ENCODE measurements at regions of chr19 and their contacts with region 1.

Region 1: GRCh38 chr19:14006243-14006765 is at the start of gene RFX1:
- DNase-seq: peak; percentile 99
- H3K4me3 Mint-ChIP-seq: peak within 1 kb of the TSS; percentile 87
- H3K27ac Mint-ChIP-seq: peak within 1 kb of the TSS; percentile 99
- H3K4me1 Mint-ChIP-seq: peaks cover 35% of the 10 kb centered on the region
- H3K27me3 Mint-ChIP-seq: peaks cover 2% of the 10 kb centered on the region
- total RNA-seq, gene RFX1: 16.0 and 17.0 TPM in 2 replicates

Region 2: GRCh38 chr19:13952154-13953035 is 53.9 kb before region 1 on chr19 and contains the start of gene DCAF15:
- intact Hi-C with region 1: loop called (anchors 1 kb)
- DNase-seq: peak; percentile 99
- H3K4me3 Mint-ChIP-seq: peak within 1 kb of the TSS; percentile 96
- H3K27ac Mint-ChIP-seq: peak within 1 kb of the TSS; percentile 86
- H3K4me1 Mint-ChIP-seq: peaks cover 17% of the 10 kb centered on the region
- H3K27me3 Mint-ChIP-seq: no peaks in the 10 kb centered on the region
- total RNA-seq, gene DCAF15: 57.8 and 61.5 TPM in 2 replicates

Region 3: DNA sequence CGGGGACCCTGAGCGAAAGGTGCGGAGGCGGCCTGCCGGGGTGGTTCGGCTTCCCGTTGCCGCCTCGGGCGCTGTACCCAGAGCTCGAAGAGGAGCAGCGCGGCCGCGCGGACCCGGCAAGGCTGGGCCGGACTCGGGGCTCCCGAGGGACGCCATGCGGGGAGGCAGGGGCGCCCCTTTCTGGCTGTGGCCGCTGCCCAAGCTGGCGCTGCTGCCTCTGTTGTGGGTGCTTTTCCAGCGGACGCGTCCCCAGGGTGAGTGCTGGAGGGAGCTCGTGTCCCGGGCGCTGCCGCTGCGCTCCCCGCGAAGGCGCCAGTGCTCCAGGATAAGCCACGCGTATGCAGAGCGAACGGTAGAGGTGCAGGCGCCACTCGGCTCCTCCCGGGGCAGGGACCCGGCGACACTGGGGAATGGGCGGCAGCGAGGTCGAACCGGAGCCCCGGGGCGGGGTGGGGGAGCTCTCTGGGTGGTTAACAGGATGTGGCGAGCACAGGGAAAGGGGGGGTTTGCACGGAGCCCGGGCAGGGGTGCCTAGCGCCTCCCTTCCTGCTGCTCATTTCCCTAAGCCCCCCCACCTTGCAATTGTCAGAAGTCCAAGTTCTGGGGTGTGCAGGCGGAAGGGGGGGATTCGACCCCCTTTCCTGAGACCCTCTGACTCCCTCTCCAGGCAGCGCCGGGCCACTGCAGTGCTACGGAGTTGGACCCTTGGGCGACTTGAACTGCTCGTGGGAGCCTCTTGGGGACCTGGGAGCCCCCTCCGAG is 25.6 kb after region 1 on chr19 and contains the start of gene IL27RA:
- intact Hi-C with region 1: loop called (anchors 1 kb)
- DNase-seq: peak; percentile 78
- H3K4me3 Mint-ChIP-seq: peak within 1 kb of the TSS; percentile 95
- H3K27ac Mint-ChIP-seq: peak within 1 kb of the TSS; percentile 96
- H3K4me1 Mint-ChIP-seq: peaks cover 13% of the 10 kb centered on the region
- H3K27me3 Mint-ChIP-seq: peaks cover 3% of the 10 kb centered on the region
- total RNA-seq, gene IL27RA: 82.5 and 84.9 TPM in 2 replicates

Region 4: DNA sequence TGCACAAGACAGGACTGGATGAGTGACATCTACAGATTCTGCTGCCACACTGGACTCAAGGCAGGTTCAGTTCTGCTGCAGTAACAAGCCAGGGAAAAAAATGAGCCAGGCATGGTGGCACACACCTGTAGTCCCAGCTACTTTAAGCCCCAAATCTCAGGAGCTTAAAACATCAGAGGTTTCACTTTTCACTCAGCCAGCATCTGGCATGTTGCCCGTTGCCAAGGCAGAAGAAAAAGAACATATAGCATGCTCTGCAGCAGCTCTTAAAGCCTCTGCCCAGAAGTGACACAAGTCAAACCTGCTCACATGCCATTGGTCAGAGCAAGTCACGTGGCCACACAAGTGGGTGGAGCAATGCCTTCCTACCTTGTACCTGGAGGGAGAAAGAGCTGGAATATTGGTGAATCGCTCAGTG is 360.2 kb after region 1 on chr19:
- intact Hi-C with region 1: loop called (anchors 10 kb)
- DNase-seq: peak; percentile 86
- H3K4me3 Mint-ChIP-seq: peak overlapping the region; percentile 74
- H3K27ac Mint-ChIP-seq: peak overlapping the region; percentile 97
- H3K4me1 Mint-ChIP-seq: peaks cover 80% of the 10 kb centered on the region
- H3K27me3 Mint-ChIP-seq: no peaks in the 10 kb centered on the region

Measured in activated T-helper 1 cell treated with anti-CD3 and anti-CD28 coated beads, Interleukin-12 subunit alpha, Interleukin-12 subunit beta, Interleukin-2, Interleukin-4 antibody, amounts not matched to agents 30 ng/mL and 10 ng/mL and 1 ng/mL, durations not matched to agents 14 hours and 24 hours and 36 hours (primary cell).